ENCODE measurements at regions of chr1 and their contacts with region 1.

Region 1: GRCh38 chr1:239898062-239898730 is 193.5 kb upstream of the FMN2 start:
- DNase-seq: peak; percentile 80 to 83
- ATAC-seq: peak; percentile 91
- H3K4me3 ChIP-seq: peak overlapping the region in 1 of 2 donors; percentile 18
- H3K27ac ChIP-seq: no peak overlapping the region
- H3K4me1 ChIP-seq: no peaks in the 10 kb centered on the region
- H3K27me3 ChIP-seq: no peaks in the 10 kb centered on the region

Region 2: DNA sequence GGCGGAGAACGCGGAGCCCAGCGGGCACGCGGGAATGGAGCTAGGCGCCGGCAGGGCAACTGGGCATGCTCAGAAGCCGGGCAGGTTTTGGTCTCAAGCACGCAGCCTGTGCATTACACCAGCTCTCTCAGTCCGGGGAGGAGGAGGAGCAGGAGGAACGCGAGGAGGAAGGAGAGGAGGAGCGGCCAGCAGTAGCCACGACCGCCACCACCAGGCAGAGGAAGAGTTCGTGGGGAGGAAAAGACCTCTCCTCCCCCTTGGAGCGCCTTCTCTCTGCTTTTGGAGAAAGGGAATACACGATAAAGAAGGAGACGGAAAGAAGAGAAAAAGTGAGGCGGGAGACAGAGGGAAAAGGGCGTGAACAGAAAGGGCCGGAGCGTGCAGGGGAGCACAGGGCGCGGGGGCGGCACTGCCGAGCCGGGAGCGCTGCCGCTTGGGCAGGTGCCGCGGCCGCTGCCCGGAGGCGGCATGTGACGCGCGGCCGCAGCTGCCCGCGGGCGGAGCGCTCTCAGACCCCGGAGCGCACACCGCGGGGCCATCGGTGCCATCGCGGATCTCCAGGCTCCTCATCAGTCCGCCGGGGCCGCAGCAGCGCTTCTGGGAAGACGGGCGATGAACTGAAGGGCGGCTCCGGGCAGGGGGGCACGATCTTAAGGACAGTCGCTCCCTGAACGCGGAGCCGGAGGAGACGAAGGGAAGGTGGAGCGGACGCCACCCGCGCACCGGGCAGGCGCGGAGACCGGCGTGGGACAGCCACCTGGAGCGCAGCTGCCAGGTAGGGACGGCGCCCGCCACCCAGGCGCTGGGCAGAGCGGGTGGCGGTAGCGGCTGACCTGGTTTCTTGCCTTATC is 511.5 kb before region 1 on chr1 and contains the start of gene CHRM3:
- intact Hi-C with region 1: loop called in 1 of 2 experiments (anchors 5 kb)
- DNase-seq: peak; percentile 57 to 77
- ATAC-seq: peak; percentile 83
- H3K4me3 ChIP-seq: peak within 1 kb of the TSS; percentile 27 to 37
- H3K27ac ChIP-seq: no peak within 1 kb of the TSS
- H3K4me1 ChIP-seq: no peaks in the 10 kb centered on the region
- H3K27me3 ChIP-seq: no peaks in the 10 kb centered on the region
- total RNA-seq, gene CHRM3: 3.8 to 4.0 TPM

Region 3: DNA sequence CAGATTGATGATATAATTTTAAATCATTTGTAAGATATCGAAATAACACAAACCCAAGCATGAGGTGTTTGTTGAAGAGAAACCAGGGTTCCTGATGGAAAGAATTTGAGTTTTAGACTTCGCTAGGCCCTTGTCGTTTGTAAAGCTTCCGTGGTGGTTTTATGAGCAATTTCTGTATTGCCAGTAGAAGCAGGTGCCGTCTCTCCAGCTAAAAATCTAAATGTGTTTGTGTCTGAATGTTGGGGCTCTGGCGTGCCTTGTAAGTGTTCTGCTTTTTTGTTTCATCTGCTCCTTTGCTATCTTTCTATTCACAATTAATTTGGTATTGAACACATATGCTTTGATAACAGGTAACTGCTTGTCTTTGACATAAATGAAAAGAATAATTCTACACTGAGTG is 484.3 kb before region 1 on chr1:
- intact Hi-C with region 1: loop called in 1 of 2 experiments (anchors 5 kb)
- DNase-seq: no peak
- ATAC-seq: no peak
- H3K4me3 ChIP-seq: no peak overlapping the region
- H3K27ac ChIP-seq: no peak overlapping the region
- H3K4me1 ChIP-seq: no peaks in the 10 kb centered on the region
- H3K27me3 ChIP-seq: no peaks in the 10 kb centered on the region

Region 4: GRCh38 chr1:239606850-239607400 is 291.3 kb before region 1 on chr1:
- intact Hi-C with region 1: no loop called
- DNase-seq: no peak
- ATAC-seq: no peak
- H3K4me3 ChIP-seq: no peak overlapping the region
- H3K27ac ChIP-seq: no peak overlapping the region
- H3K4me1 ChIP-seq: peaks cover 0 to 1% of the 10 kb centered on the region in 2 donors
- H3K27me3 ChIP-seq: no peaks in the 10 kb centered on the region

Region 5: DNA sequence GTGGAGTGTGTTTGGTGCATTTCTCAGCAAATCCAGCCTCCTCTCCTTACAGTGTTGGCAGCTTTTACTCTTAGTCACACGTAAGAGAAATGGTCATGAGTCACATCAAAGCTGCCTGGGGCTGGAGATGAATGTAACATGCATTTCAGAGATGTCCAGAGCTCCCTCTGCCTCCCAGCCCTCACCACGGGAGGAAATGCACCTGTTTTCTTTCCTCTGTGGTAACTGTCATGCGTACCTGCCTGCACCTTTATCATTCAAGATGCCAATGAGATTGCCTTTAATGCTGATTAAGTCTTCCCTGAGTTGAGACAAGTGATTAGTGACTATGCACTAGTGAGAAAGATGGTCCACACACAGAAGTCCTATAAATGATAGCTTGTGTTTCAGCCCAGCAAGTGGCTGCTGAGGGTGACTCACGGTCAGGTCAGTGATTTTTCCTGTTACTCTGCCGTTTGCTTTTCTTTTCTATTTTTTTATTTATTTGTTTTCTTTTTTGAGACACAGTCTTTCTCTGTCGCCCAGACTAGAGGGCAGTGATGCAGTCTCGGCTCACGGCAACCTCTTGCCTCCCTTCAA is 83.8 kb before region 1 on chr1:
- intact Hi-C with region 1: loop called in 1 of 2 experiments (anchors 10 kb)
- DNase-seq: peak in 1 of 2 donors; percentile 50
- ATAC-seq: peak; percentile 65
- H3K4me3 ChIP-seq: no peak overlapping the region
- H3K27ac ChIP-seq: peak overlapping the region in 1 of 2 donors; percentile 80
- H3K4me1 ChIP-seq: peaks cover 0 to 2% of the 10 kb centered on the region in 2 donors
- H3K27me3 ChIP-seq: no peaks in the 10 kb centered on the region

Measured in aorta (tissue), 5 donors.